ENCODE measurements at regions of chr6 and their contacts with region 1.

Region 1: GRCh38 chr6:593139-593906 is 63.6 kb downstream of the HUS1B start:
- DNase-seq: peak; percentile 54

Region 2: GRCh38 chr6:971981-972640 is 378.8 kb after region 1 on chr6:
- in situ Hi-C with region 1: no loop called
- DNase-seq: no peak

Region 3: GRCh38 chr6:1396952-1397868 is 803.9 kb after region 1 on chr6:
- in situ Hi-C with region 1: loop called (anchors 25 kb)
- DNase-seq: peak; percentile 72